SK-N-SH (cell line): ENCODE measurements at regions of chr10 and their contacts with region 1.

Region 1: GRCh38 chr10:119608316-119609155 is 11.8 kb upstream of the TIAL1 start:
- DNase-seq: peak; percentile 67
- H3K4me3 ChIP-seq: no peak overlapping the region; a peak in 1 of 4 replicates
- H3K27ac ChIP-seq: no peak overlapping the region
- H3K4me1 ChIP-seq: peaks cover 0 to 4% of the 10 kb centered on the region in 2 experiments; a peak in 1 of 4 replicates
- H3K27me3 ChIP-seq: no peaks in the 10 kb centered on the region
- CTCF ChIP-seq: peak; percentile 74
- EP300 ChIP-seq: no peak
- RAD21 ChIP-seq: peak; percentile 88

Region 2: GRCh38 chr10:119596537-119597404 is 11.8 kb before region 1 on chr10 and contains the start of gene TIAL1:
- CTCF ChIA-PET with region 1: interaction called, 12 read pairs
- POLR2A ChIA-PET with region 1: no interaction called
- DNase-seq: peak; percentile 89
- H3K4me3 ChIP-seq: peak within 1 kb of the TSS; percentile 96
- H3K27ac ChIP-seq: peak within 1 kb of the TSS; percentile 99
- H3K4me1 ChIP-seq: peaks cover 31% of the 10 kb centered on the region in 2 experiments
- H3K27me3 ChIP-seq: no peaks in the 10 kb centered on the region
- CTCF ChIP-seq: no peak
- EP300 ChIP-seq: no peak
- RAD21 ChIP-seq: no peak
- polyA plus RNA-seq, gene TIAL1: 58.0 and 70.6 TPM in 2 replicates